Common myeloid progenitor, CD34-positive (primary cell): ENCODE measurements at regions of chr19 and their contacts with region 1.

Region 1: GRCh38 chr19:49718511-49718910 is 27.6 kb downstream of the CPT1C start:
- DNase-seq: peak in 2 of 3 donors; percentile 13 to 26
- H3K4me3 ChIP-seq: no peak overlapping the region
- H3K27ac ChIP-seq: no peak overlapping the region
- H3K4me1 ChIP-seq: peaks cover 0 to 4% (median 2%) of the 10 kb centered on the region in 4 experiments
- H3K27me3 ChIP-seq: no peaks in the 10 kb centered on the region

Region 2: GRCh38 chr19:49730166-49730565 is 11.7 kb after region 1 on chr19:
- CTCF ChIA-PET with region 1: interaction called, 13 read pairs
- POLR2A ChIA-PET with region 1: no interaction called
- DNase-seq: peak; percentile 61 to 87 (median 86)
- H3K4me3 ChIP-seq: no peak overlapping the region
- H3K27ac ChIP-seq: no peak overlapping the region
- H3K4me1 ChIP-seq: peaks cover 0 to 11% (median 6%) of the 10 kb centered on the region in 4 experiments
- H3K27me3 ChIP-seq: no peaks in the 10 kb centered on the region

Region 3: GRCh38 chr19:49758292-49758691 is 39.8 kb after region 1 on chr19:
- CTCF ChIA-PET with region 1: no interaction called
- POLR2A ChIA-PET with region 1: no interaction called
- DNase-seq: no peak
- H3K4me3 ChIP-seq: no peak overlapping the region
- H3K27ac ChIP-seq: no peak overlapping the region
- H3K4me1 ChIP-seq: peaks cover 0 to 10% (median 2%) of the 10 kb centered on the region in 4 experiments
- H3K27me3 ChIP-seq: no peaks in the 10 kb centered on the region

Region 4: GRCh38 chr19:49818649-49819370 is 100.3 kb after region 1 on chr19:
- CTCF ChIA-PET with region 1: no interaction called
- POLR2A ChIA-PET with region 1: no interaction called
- DNase-seq: no peak
- H3K4me3 ChIP-seq: peak overlapping the region; percentile 77 to 99 (median 92)
- H3K27ac ChIP-seq: peak overlapping the region; percentile 97 to 99
- H3K4me1 ChIP-seq: peaks cover 3 to 25% (median 16%) of the 10 kb centered on the region in 4 experiments
- H3K27me3 ChIP-seq: no peaks in the 10 kb centered on the region